ENCODE measurements at regions of chr11 and their contacts with region 1.

Region 1: DNA sequence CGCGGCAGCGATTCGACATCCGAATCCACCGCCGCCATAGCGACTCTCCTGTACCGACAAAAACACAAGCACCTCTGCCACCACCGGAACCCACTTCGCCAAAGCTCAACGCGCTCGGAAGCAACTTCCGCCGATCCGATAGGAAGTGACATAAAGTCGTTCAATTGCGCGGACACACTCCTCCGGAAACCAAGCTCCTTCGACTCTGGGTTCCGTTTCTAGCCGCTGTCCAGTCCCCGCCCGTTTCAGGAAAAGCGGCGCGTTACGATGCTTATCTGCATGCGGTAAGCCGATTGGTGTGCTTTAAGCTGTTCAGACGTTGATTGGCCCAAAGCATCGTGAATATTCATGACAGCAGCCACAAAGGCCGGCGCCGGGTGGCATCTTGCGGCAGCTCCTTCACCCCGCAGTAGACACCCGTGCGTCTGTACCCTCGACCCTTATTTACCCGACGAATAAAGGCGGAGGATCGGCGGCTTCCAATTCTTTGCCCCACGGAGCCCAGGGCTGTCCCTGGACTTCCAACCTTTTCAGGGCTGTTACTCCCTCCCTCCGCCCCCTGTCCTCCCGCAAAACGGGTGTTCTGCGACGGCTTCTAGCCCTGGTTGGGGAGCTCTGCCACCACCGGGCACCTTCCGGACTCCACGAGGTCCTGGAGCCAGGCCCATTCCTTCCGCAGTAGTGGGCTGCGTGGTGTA is at the start of gene TUT1:
- DNase-seq: peak; percentile 91 to 99 (median 96)
- ATAC-seq: peak; percentile 85 to 91 (median 88)
- H3K4me3 ChIP-seq: peak within 1 kb of the TSS; percentile 90 to 93
- H3K4me3 Mint-ChIP-seq: peak within 1 kb of the TSS; percentile 96 to 99 (median 97)
- H3K27ac ChIP-seq: peak within 1 kb of the TSS; percentile 92
- H3K27ac Mint-ChIP-seq: peak within 1 kb of the TSS; percentile 98 to 99
- H3K4me1 ChIP-seq: peaks cover 15 to 48% of the 10 kb centered on the region in 2 experiments
- H3K4me1 Mint-ChIP-seq: peaks cover 44 to 57% (median 55%) of the 10 kb centered on the region in 3 donors
- H3K27me3 ChIP-seq: no peaks in the 10 kb centered on the region
- H3K27me3 Mint-ChIP-seq: no peaks in the 10 kb centered on the region
- total RNA-seq, gene TUT1: 35.2 to 56.0 (median 42.9) TPM

Region 2: GRCh38 chr11:62427630-62428233 is 163.9 kb before region 1 on chr11:
- CTCF ChIA-PET with region 1: interaction called in 1 of 2 experiments, 17 read pairs
- POLR2A ChIA-PET with region 1: interaction called in 1 of 2 experiments, 3 read pairs
- DNase-seq: no peak
- ATAC-seq: peak in 1 of 4 experiments; percentile 17
- H3K4me3 ChIP-seq: no peak overlapping the region
- H3K4me3 Mint-ChIP-seq: peak overlapping the region; percentile 8 to 60 (median 21)
- H3K27ac ChIP-seq: peak overlapping the region; percentile 16
- H3K27ac Mint-ChIP-seq: peak overlapping the region; percentile 55 to 91
- H3K4me1 ChIP-seq: peaks cover 16 to 24% of the 10 kb centered on the region in 2 experiments
- H3K4me1 Mint-ChIP-seq: peaks cover 30 to 67% (median 49%) of the 10 kb centered on the region in 3 donors
- H3K27me3 ChIP-seq: peaks cover 0 to 5% of the 10 kb centered on the region in 2 experiments
- H3K27me3 Mint-ChIP-seq: no peaks in the 10 kb centered on the region

Region 3: DNA sequence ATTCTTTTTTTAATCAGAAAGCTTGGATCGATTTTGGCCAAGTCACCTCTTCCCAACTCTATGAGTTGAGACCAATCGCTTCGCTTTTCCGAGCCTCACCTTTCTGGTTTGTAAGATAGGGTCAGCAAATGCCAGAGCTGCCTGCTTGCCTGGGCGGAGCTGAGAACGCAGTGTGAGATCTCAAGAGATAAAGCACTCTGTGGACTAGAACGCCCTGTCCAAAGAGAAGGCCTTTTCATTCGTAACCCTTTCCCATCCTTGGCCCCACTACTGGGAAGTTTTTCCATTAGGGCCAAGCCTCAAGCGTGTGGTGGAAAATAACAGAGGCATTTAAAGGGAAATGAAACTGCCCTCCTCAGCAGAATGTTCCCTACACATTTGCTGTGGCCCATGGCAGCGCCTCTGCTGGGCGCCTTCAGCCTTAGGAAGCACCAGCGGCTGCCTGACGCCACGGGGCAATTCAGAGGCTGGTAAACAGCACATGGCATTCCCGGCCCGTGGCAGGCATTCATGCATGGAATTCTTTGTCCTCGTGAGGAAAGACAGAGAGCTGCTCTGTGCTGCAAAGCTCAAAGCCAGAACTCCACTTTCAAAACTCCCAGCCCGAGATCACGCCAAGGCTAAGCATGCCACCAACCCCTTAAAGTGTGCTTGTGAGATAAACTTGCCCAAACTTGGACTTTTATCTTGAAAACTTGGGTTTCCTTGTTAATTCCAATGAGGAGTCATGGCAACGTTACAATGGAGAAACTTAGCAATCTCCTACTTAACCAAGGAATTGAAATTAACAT is 83.1 kb before region 1 on chr11:
- CTCF ChIA-PET with region 1: no interaction called
- POLR2A ChIA-PET with region 1: no interaction called
- DNase-seq: peak in 1 of 35 experiments; percentile 21
- ATAC-seq: no peak
- H3K4me3 ChIP-seq: no peak overlapping the region
- H3K4me3 Mint-ChIP-seq: no peak overlapping the region
- H3K27ac ChIP-seq: no peak overlapping the region
- H3K27ac Mint-ChIP-seq: no peak overlapping the region
- H3K4me1 ChIP-seq: no peaks in the 10 kb centered on the region
- H3K4me1 Mint-ChIP-seq: peaks cover 0 to 2% (median 1%) of the 10 kb centered on the region in 3 donors
- H3K27me3 ChIP-seq: peaks cover 0 to 3% of the 10 kb centered on the region in 2 experiments
- H3K27me3 Mint-ChIP-seq: no peaks in the 10 kb centered on the region

Region 4: DNA sequence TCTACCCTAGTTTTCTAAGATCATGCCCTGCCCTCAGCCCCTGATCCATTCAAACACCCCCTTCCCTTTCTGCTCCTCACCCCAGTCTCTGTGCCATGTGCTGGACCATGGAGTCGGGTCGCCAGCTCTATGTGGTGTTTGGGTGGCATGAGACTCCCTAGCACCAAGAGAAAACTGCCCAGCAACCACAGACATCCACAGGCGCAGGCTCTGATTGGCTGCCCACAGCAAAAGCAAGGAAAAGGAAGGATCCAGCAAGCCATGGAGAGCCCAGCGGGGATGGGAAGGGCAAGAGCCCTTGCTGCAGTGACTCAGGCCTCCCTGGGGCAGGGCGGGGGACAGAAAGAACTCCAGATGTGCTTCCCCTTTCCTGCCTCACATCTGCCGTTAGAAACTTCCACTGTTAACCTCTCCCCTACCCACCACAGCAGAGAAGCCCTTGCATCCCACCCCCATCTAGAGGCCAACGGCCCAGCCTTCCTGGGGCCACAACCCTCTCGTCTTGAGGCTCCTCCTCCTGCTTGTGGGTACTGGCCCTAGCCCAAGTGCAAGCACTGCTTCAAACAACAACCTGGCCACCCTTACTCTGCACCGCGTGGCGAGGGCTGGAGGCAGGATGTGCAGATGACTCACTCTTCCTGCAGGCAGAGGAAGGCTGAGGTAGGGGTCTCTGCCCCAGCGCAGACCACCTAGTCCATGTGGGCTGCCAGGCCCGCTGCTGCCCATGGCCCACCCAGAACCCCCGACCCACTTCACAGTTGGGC is 35.3 kb before region 1 on chr11:
- CTCF ChIA-PET with region 1: interaction called, 8 to 9 read pairs
- POLR2A ChIA-PET with region 1: interaction called, 11 to 14 read pairs
- DNase-seq: peak; percentile 65 to 91 (median 80)
- ATAC-seq: peak; percentile 53 to 79 (median 76)
- H3K4me3 ChIP-seq: peak overlapping the region in 1 of 2 donors; percentile 37
- H3K4me3 Mint-ChIP-seq: peak overlapping the region; percentile 71 to 82 (median 77)
- H3K27ac ChIP-seq: peak overlapping the region; percentile 98
- H3K27ac Mint-ChIP-seq: peak overlapping the region; percentile 97 to 99
- H3K4me1 ChIP-seq: peaks cover 51 to 97% of the 10 kb centered on the region in 2 experiments
- H3K4me1 Mint-ChIP-seq: peaks cover 90 to 96% (median 91%) of the 10 kb centered on the region in 3 donors
- H3K27me3 ChIP-seq: no peaks in the 10 kb centered on the region
- H3K27me3 Mint-ChIP-seq: no peaks in the 10 kb centered on the region

Region 5: DNA sequence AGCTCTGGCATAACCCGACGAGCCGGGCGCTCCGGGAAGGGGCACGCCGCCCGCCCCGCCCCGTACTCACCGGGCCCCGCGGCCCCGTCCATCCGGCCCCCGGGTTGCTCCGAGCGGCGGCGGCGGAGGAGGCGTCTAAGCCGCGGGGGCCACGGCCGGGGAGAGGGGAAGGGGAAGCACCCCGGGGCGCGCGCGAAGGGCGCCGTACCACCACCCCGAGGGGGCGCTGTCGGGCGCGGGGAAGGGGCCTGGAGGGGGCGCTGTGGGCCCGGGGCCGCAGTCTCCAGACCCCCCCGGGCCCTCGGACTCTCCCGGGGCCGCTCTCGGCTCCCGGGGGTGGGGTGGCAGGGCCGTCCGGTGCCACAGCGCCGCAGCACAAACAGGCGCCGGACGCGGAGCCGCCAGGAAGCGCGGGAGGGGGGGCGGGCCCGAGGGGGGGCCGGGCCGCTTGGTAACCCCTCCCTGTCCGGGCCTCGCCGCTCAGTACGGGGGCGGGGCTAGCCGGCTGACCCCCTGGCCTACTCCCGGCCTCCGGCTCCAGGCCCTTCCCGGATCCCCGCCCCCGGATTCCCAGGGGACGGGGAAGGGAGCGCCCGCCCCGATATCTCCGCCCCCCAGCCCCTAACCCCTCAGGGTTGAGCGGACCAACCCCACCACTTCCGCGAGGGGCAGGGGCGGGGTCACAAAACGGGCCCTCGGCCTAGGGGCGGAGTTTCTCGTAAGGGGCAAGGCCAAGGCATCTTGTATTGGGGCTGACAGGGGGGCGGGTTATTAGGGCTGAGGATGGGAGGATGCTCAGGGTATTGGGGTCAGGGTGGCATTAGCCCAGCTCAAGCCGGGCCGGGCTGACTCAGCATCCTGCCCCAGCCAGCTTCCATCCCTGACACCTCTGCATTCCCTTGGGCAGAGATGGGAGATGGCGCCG is 21.0 kb after region 1 on chr11 and contains the starts of genes EML3 and ROM1:
- CTCF ChIA-PET with region 1: interaction called, 3 to 10 read pairs
- POLR2A ChIA-PET with region 1: no interaction called
- DNase-seq: peak; percentile 71 to 94 (median 81)
- ATAC-seq: peak; percentile 77 to 80 (median 80)
- H3K4me3 ChIP-seq: peak within 1 kb of the TSS; percentile 85 to 88
- H3K4me3 Mint-ChIP-seq: peak within 1 kb of the TSS; percentile 97 to 98 (median 97)
- H3K27ac ChIP-seq: peak within 1 kb of the TSS; percentile 83
- H3K27ac Mint-ChIP-seq: peak within 1 kb of the TSS; percentile 98
- H3K4me1 ChIP-seq: peaks cover 3 to 54% of the 10 kb centered on the region in 2 experiments
- H3K4me1 Mint-ChIP-seq: peaks cover 48 to 57% (median 49%) of the 10 kb centered on the region in 3 donors
- H3K27me3 ChIP-seq: no peaks in the 10 kb centered on the region
- H3K27me3 Mint-ChIP-seq: no peaks in the 10 kb centered on the region
- total RNA-seq, gene EML3: 160 to 372 (median 328) TPM
- total RNA-seq, gene ROM1: 1.6 to 4.5 (median 3.5) TPM

Region 6: GRCh38 chr11:62694455-62695167 is 103.0 kb after region 1 on chr11:
- CTCF ChIA-PET with region 1: interaction called, 7 to 24 read pairs
- POLR2A ChIA-PET with region 1: no interaction called
- DNase-seq: peak; percentile 45 to 90 (median 70)
- ATAC-seq: peak; percentile 68 to 91 (median 88)
- H3K4me3 ChIP-seq: no peak overlapping the region
- H3K4me3 Mint-ChIP-seq: no peak overlapping the region
- H3K27ac ChIP-seq: no peak overlapping the region
- H3K27ac Mint-ChIP-seq: peak overlapping the region; percentile 11 to 23
- H3K4me1 ChIP-seq: peaks cover 0 to 8% of the 10 kb centered on the region in 2 experiments
- H3K4me1 Mint-ChIP-seq: peaks cover 5 to 7% (median 5%) of the 10 kb centered on the region in 3 donors
- H3K27me3 ChIP-seq: no peaks in the 10 kb centered on the region
- H3K27me3 Mint-ChIP-seq: no peaks in the 10 kb centered on the region

Region 7: GRCh38 chr11:62726915-62727763 is 135.5 kb after region 1 on chr11 and contains the start of gene HNRNPUL2:
- CTCF ChIA-PET with region 1: interaction called in 1 of 2 experiments, 5 read pairs
- POLR2A ChIA-PET with region 1: interaction called, 3 to 11 read pairs
- DNase-seq: peak; percentile 96 to 100 (median 98)
- ATAC-seq: peak; percentile 77 to 84 (median 82)
- H3K4me3 ChIP-seq: peak within 1 kb of the TSS; percentile 86 to 95
- H3K4me3 Mint-ChIP-seq: peak within 1 kb of the TSS; percentile 95 to 98 (median 98)
- H3K27ac ChIP-seq: peak within 1 kb of the TSS; percentile 94
- H3K27ac Mint-ChIP-seq: peak within 1 kb of the TSS; percentile 98 to 99
- H3K4me1 ChIP-seq: peaks cover 20 to 43% of the 10 kb centered on the region in 2 experiments
- H3K4me1 Mint-ChIP-seq: peaks cover 47 to 62% (median 58%) of the 10 kb centered on the region in 3 donors
- H3K27me3 ChIP-seq: no peaks in the 10 kb centered on the region
- H3K27me3 Mint-ChIP-seq: no peaks in the 10 kb centered on the region
- total RNA-seq, gene HNRNPUL2: 45.8 to 67.8 (median 62.7) TPM

Measured in T-cell (primary cell).